Lower lobe of right lung (tissue), 2 donors: ENCODE measurements at regions of chr10 and their contacts with region 1.

Region 1: DNA sequence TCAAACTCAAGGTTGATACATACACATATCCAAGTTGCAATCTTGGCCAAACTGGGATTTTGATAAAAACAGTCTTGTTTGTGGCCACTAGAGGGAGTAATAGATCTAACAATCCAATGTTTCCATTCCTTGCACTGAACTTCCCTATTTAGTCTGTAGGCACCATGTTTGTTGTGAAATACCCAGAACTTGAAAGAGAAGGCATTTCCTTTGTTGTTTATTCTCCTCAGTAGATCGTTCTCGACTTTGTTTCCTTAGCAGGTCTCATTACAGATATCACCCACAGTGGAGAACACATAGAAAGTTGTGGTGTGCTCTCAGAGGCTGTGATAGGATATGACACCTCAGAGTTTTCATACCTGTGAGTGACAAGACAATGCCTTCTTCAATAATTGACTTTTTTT is 70.3 kb upstream of the MXI1 start:
- DNase-seq: no peak
- ATAC-seq: peak; percentile 91
- H3K4me3 ChIP-seq: no peak overlapping the region
- H3K27ac ChIP-seq: peak overlapping the region; percentile 7
- H3K4me1 ChIP-seq: peaks cover 20% of the 10 kb centered on the region
- H3K27me3 ChIP-seq: no peaks in the 10 kb centered on the region
- CTCF ChIP-seq: peak; percentile 81

Region 2: GRCh38 chr10:109966961-109967738 is 170.0 kb before region 1 on chr10:
- intact Hi-C with region 1: no loop called
- DNase-seq: no peak
- ATAC-seq: no peak
- H3K4me3 ChIP-seq: no peak overlapping the region
- H3K27ac ChIP-seq: no peak overlapping the region
- H3K4me1 ChIP-seq: peaks cover 18% of the 10 kb centered on the region
- H3K27me3 ChIP-seq: no peaks in the 10 kb centered on the region
- CTCF ChIP-seq: no peak

Region 3: GRCh38 chr10:110279407-110279986 is 142.4 kb after region 1 on chr10:
- intact Hi-C with region 1: loop called (anchors 5 kb)
- DNase-seq: no peak
- ATAC-seq: peak; percentile 79 to 85
- H3K4me3 ChIP-seq: no peak overlapping the region
- H3K27ac ChIP-seq: no peak overlapping the region
- H3K4me1 ChIP-seq: peaks cover 7% of the 10 kb centered on the region
- H3K27me3 ChIP-seq: no peaks in the 10 kb centered on the region
- CTCF ChIP-seq: peak; percentile 73